Caco-2 (cell line): ENCODE measurements at regions of chr11 and their contacts with region 1.

Region 1: DNA sequence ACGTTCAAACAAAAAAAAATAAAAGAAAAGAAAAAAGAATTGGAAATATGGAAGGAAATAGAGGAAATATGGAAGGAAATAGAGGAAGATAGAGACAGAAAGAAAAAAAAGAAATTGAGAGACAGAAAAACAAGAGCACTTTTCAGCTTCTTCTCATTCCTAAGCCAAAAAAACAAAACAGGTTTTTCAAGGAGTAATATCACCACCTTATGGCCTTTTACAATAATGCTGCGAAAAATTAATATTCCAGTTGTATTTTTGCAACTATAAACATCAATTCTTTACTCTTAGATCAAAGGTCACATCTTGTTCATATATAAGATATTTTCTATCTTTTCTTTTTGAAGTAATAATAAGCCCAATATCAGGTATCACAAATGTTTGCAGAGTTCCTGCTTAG is 328.3 kb downstream of the FAT3 start:
- DNase-seq: no peak
- H3K4me3 ChIP-seq: no peak overlapping the region
- H3K4me3 Mint-ChIP-seq: no peak overlapping the region
- H3K27ac Mint-ChIP-seq: no peak overlapping the region
- H3K4me1 ChIP-seq: no peaks in the 10 kb centered on the region
- H3K4me1 Mint-ChIP-seq: no peaks in the 10 kb centered on the region
- H3K27me3 ChIP-seq: no peaks in the 10 kb centered on the region
- H3K27me3 Mint-ChIP-seq: peaks cover 7% of the 10 kb centered on the region
- CTCF ChIP-seq: peak; percentile 23 to 60

Region 2: GRCh38 chr11:92070026-92070889 is 482.7 kb before region 1 on chr11:
- CTCF ChIA-PET with region 1: no interaction called
- POLR2A ChIA-PET with region 1: no interaction called
- intact Hi-C with region 1: loop called (anchors 1 kb)
- DNase-seq: no peak
- H3K4me3 ChIP-seq: no peak overlapping the region
- H3K4me3 Mint-ChIP-seq: no peak overlapping the region
- H3K27ac Mint-ChIP-seq: no peak overlapping the region
- H3K4me1 ChIP-seq: no peaks in the 10 kb centered on the region
- H3K4me1 Mint-ChIP-seq: no peaks in the 10 kb centered on the region
- H3K27me3 ChIP-seq: no peaks in the 10 kb centered on the region
- H3K27me3 Mint-ChIP-seq: peaks cover 4% of the 10 kb centered on the region
- CTCF ChIP-seq: peak in 1 of 2 experiments; percentile 18

Region 3: GRCh38 chr11:92136797-92137196 is 416.1 kb before region 1 on chr11:
- CTCF ChIA-PET with region 1: no interaction called
- POLR2A ChIA-PET with region 1: no interaction called
- intact Hi-C with region 1: loop called (anchors 5 kb)
- DNase-seq: peak in 1 of 2 experiments; percentile 39
- H3K4me3 ChIP-seq: no peak overlapping the region
- H3K4me3 Mint-ChIP-seq: no peak overlapping the region
- H3K27ac Mint-ChIP-seq: no peak overlapping the region
- H3K4me1 ChIP-seq: no peaks in the 10 kb centered on the region
- H3K4me1 Mint-ChIP-seq: no peaks in the 10 kb centered on the region
- H3K27me3 ChIP-seq: no peaks in the 10 kb centered on the region
- H3K27me3 Mint-ChIP-seq: no peaks in the 10 kb centered on the region
- CTCF ChIP-seq: peak; percentile 31 to 68

Region 4: DNA sequence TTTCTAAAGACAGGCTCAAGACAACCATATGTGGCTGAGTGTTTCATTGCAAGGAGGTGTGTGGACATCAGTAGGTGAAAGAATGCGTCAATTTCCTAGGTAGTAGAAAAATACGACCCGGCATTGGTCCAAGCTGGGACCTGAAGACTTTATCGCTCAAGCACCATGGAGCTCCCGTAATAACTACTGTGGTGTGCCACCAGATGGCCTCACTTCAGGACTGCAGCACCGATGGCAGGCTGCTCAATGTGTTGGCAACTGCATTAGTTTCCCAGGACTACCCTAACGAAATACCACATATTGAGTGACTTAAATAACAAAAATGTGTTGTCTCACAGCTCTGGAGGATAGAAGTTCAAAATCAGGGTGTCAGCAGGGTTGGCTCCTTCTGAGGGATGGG is 400.7 kb before region 1 on chr11:
- CTCF ChIA-PET with region 1: interaction called, 4 read pairs
- POLR2A ChIA-PET with region 1: no interaction called
- intact Hi-C with region 1: loop called (anchors 2 kb)
- DNase-seq: peak; percentile 39 to 53
- H3K4me3 ChIP-seq: no peak overlapping the region
- H3K4me3 Mint-ChIP-seq: no peak overlapping the region
- H3K27ac Mint-ChIP-seq: no peak overlapping the region
- H3K4me1 ChIP-seq: no peaks in the 10 kb centered on the region; the same call in 1 of the 2 replicates
- H3K4me1 Mint-ChIP-seq: no peaks in the 10 kb centered on the region
- H3K27me3 ChIP-seq: no peaks in the 10 kb centered on the region
- H3K27me3 Mint-ChIP-seq: peaks cover 3% of the 10 kb centered on the region
- CTCF ChIP-seq: peak; percentile 27 to 34

Region 5: DNA sequence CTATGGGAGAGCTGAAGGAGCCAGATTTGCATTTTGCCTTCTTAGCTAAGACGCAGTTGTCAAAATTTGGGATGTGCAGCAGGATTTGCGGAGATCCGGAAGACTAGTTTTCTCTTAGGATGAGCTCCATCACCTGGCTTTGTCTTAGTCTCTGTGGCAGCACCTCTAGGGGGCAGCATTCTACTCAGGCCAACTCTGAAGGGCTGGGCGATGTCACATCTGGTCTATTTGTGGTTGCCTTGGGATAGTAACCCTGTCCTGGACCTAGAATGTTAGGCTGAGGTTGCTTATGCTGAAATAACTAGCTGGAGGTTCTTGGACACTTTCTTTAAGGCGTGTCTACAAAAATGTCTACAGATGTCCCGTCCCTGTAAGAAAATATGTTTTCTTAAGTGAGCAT is 212.1 kb before region 1 on chr11:
- CTCF ChIA-PET with region 1: no interaction called
- POLR2A ChIA-PET with region 1: no interaction called
- intact Hi-C with region 1: loop called (anchors 5 kb)
- DNase-seq: peak; percentile 42 to 58
- H3K4me3 ChIP-seq: no peak overlapping the region
- H3K4me3 Mint-ChIP-seq: no peak overlapping the region
- H3K27ac Mint-ChIP-seq: no peak overlapping the region
- H3K4me1 ChIP-seq: no peaks in the 10 kb centered on the region
- H3K4me1 Mint-ChIP-seq: peaks cover 12% of the 10 kb centered on the region
- H3K27me3 ChIP-seq: no peaks in the 10 kb centered on the region
- H3K27me3 Mint-ChIP-seq: no peaks in the 10 kb centered on the region
- CTCF ChIP-seq: peak; percentile 55 to 59

Region 6: DNA sequence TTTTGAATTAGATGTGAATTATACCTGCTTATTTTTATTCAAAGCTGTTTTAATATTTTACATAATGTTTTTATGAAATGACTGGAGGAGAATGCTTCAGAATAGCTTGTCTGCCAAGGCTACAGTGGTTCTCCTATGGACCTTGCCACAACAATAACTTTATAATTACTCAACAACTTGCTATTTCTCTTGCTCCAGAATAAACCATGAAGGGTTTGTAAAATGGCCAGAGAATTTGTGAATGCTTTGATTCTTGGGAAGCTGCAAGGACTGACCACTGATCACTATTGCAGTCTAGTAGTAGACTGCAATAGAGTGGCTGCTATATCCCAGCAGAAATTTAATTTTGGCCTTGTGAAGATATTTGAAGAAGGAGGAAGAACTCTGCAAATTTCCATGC is 128.7 kb before region 1 on chr11:
- CTCF ChIA-PET with region 1: no interaction called
- POLR2A ChIA-PET with region 1: no interaction called
- intact Hi-C with region 1: no loop called
- DNase-seq: no peak
- H3K4me3 ChIP-seq: no peak overlapping the region
- H3K4me3 Mint-ChIP-seq: no peak overlapping the region
- H3K27ac Mint-ChIP-seq: no peak overlapping the region
- H3K4me1 ChIP-seq: no peaks in the 10 kb centered on the region
- H3K4me1 Mint-ChIP-seq: no peaks in the 10 kb centered on the region
- H3K27me3 ChIP-seq: no peaks in the 10 kb centered on the region
- H3K27me3 Mint-ChIP-seq: peaks cover 2% of the 10 kb centered on the region
- CTCF ChIP-seq: no peak

Region 7: DNA sequence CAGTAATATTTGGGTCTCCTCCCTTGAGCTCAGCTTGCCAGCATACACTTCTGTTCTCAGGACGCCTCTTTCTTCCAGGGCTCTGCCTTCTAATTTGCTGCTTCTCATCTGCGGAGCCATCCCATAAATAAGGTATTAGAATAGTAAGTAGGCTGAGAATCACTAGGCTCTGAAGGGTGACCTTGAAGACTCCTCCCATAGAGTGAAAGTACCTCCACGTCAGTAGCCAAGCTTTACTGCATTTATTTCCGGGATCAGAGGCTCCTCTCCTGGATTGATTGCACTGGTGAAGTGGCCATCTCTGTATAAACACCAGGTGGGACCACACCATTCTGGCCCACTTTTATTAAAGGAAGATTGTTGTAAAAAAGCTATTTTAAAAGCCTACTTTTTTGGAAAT is 12.8 kb before region 1 on chr11:
- CTCF ChIA-PET with region 1: no interaction called
- POLR2A ChIA-PET with region 1: no interaction called
- intact Hi-C with region 1: no loop called
- DNase-seq: no peak
- H3K4me3 ChIP-seq: no peak overlapping the region
- H3K4me3 Mint-ChIP-seq: no peak overlapping the region
- H3K27ac Mint-ChIP-seq: no peak overlapping the region
- H3K4me1 ChIP-seq: no peaks in the 10 kb centered on the region
- H3K4me1 Mint-ChIP-seq: no peaks in the 10 kb centered on the region
- H3K27me3 ChIP-seq: no peaks in the 10 kb centered on the region
- H3K27me3 Mint-ChIP-seq: peaks cover 13% of the 10 kb centered on the region
- CTCF ChIP-seq: no peak

Region 8: DNA sequence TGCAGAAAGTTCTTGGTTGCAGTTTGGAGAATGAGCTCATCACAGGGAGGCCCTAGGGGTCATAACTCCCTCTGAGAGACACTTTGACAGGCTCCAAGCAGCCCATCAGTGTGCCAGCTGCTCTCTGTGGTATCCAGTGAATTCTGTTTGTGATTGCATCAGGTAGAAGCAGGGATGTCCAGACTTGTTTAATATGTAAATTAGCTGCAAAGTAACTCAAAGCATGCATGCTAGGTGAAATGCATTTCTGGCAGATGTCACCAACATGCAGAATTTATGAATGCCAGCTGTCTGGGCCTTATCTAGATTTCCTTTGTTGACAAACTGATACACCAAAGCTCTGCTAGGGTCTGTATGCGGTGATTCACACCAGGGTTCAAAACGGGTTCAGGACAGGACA is 292.9 kb after region 1 on chr11:
- CTCF ChIA-PET with region 1: no interaction called
- POLR2A ChIA-PET with region 1: no interaction called
- intact Hi-C with region 1: no loop called
- DNase-seq: no peak
- H3K4me3 ChIP-seq: no peak overlapping the region
- H3K4me3 Mint-ChIP-seq: no peak overlapping the region
- H3K27ac Mint-ChIP-seq: no peak overlapping the region
- H3K4me1 ChIP-seq: no peaks in the 10 kb centered on the region
- H3K4me1 Mint-ChIP-seq: no peaks in the 10 kb centered on the region
- H3K27me3 ChIP-seq: no peaks in the 10 kb centered on the region
- H3K27me3 Mint-ChIP-seq: peaks cover 8% of the 10 kb centered on the region
- CTCF ChIP-seq: no peak

Region 9: GRCh38 chr11:92886243-92886905 is 333.4 kb after region 1 on chr11:
- CTCF ChIA-PET with region 1: no interaction called
- POLR2A ChIA-PET with region 1: no interaction called
- intact Hi-C with region 1: loop called (anchors 5 kb)
- DNase-seq: peak; percentile 68 to 77
- H3K4me3 ChIP-seq: no peak overlapping the region
- H3K4me3 Mint-ChIP-seq: no peak overlapping the region
- H3K27ac Mint-ChIP-seq: no peak overlapping the region
- H3K4me1 ChIP-seq: no peaks in the 10 kb centered on the region
- H3K4me1 Mint-ChIP-seq: no peaks in the 10 kb centered on the region
- H3K27me3 ChIP-seq: no peaks in the 10 kb centered on the region
- H3K27me3 Mint-ChIP-seq: peaks cover 13% of the 10 kb centered on the region
- CTCF ChIP-seq: peak; percentile 85 to 89